ENCODE measurements at regions of chr9 and their contacts with region 1.

Region 1: GRCh38 chr9:84953797-84954705 is 284.5 kb downstream of the NTRK2 start:
- DNase-seq: peak; percentile 85
- ATAC-seq: peak; percentile 98

Region 2: DNA sequence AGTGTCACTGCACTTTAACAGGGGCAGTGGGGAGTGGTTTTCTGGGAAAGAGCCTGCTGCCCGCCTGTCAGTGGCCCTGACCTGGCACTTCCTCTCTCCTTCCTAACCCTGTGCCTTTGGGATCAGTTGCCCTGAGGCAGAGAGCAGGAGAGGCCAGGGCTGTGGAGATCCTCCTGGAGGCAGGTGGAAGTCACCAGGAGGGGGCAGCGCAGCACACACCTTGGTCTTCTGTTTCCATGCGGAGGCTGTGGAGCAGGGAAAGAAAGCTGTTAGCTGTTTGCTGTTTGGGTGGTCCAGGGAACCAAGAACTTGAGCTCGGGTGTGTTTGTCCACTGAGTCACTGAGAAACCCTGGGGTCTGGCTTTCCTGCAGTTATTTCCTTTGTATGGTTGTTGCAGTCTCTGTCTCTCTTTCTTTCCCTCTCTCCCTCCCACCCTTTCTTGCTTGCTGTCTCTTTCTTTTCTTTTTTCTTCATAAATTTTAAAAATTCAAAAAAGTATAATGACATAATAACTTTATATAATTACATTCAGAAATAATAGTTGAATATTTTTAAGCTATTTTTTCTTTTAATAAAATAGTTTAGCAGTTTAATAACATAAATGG is 256.4 kb before region 1 on chr9:
- intact Hi-C with region 1: loop called (anchors 10 kb)
- DNase-seq: peak; percentile 84
- ATAC-seq: peak; percentile 85